GM13977 (cell line): ENCODE measurements at regions of chr1 and their contacts with region 1.

Region 1: GRCh38 chr1:162878000-162878596 is 17.1 kb upstream of the CCDC190 start:
- DNase-seq: peak; percentile 12
- CTCF ChIP-seq: peak; percentile 63

Region 2: GRCh38 chr1:163174524-163175437 is 296.7 kb after region 1 on chr1:
- in situ Hi-C with region 1: loop called (anchors 25 kb)
- DNase-seq: peak; percentile 36
- CTCF ChIP-seq: peak; percentile 90